Tibial artery (tissue), 4 donors: ENCODE measurements at regions of chr6 and their contacts with region 1.

Region 1: DNA sequence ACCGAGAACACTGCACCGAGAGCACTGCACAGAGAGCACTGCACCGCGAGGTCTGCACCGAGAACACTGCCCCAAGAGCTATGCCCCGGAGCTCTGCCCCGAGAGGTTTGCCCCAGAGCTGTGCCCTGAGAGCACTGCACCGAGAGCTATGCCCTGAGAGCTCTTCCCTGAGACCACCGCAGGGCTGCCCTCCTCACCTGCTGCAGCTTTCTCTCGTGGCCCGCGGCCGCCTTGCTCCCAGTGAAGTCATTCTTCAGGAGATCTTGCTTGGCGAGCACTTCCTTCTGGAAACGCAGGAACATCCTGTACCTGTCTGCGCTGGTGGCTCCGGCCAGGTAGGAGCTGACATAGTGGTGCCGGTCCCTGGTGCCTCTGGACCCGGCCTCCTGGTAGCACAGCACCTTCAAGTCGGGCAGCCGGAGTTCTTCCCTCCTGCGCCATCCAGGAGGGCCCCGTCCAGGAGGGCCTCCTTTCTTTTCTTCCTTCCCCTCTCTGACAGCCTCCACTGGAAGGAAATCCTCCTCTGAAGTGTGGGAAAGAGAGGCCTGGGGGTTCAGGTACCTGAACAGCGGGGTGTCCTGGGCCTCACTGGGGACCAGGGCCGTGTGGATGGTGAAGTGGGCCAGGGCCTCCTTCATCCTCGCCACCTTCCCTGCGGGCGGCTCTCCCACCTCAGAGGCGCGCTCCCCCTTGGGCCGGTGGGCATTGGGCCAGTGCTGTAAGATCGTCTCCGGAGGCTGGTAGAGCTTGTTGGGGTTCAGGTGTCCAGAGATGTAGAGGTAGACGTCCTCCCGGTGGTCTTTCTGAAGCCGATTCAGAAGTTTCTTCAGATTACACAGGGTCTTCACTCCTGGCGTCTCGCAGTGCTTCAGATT is 7.8 kb downstream of the C6orf118 start:
- DNase-seq: no peak
- H3K4me3 ChIP-seq: no peak overlapping the region
- H3K27ac ChIP-seq: no peak overlapping the region
- H3K4me1 ChIP-seq: no peaks in the 10 kb centered on the region
- H3K27me3 ChIP-seq: no peaks in the 10 kb centered on the region
- CTCF ChIP-seq: no peak

Region 2: DNA sequence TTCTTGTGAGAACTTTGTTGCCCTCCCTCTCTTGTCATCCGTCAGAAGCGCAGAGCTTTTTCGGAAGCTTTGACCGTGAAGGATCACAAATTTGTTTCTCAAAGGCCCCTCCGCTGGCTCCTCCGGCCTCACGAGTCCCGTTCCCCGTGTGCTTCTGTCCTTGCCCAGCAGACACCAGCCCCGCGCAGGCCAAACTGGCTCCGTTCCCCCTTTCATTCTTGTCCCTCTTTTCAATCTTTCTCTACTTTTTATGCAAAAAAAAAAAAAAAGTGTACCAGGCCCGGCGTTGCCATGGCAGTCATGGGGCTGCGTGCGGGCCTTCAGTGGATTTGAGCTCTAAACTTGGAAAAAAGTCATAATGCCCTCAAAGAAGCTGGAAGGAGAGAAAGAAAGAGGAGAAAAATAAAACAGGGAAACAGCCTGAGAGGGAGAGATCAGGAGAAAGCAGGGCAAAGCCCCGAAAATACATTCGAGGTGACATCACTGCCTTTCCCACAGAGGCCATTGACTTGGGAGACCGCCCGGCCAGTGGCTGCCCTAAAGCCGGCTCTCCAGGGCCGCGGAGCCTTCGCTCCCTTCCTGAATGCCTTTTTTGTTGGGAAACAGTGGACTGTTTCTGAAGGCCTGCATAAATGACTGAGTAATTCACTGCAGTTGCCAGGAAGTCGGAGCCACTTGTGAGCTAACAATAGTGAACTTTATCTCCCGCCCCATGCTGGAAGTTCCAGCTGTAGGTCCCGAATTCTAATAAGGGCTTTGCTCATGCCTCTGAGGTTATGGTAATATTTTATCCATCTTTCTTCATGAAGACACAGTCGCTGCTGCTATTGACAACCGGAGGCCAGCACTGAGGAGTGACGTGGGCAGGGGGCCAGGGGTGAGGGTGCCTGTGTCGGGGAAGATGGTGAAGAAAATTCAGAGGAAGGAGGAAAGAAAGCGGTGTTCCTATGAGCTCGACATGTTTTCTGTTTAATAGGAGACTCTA is 1216.2 kb before region 1 on chr6:
- intact Hi-C with region 1: loop called (anchors 5 kb)
- DNase-seq: peak; percentile 86 to 93
- H3K4me3 ChIP-seq: peak overlapping the region; percentile 38 to 47
- H3K27ac ChIP-seq: peak overlapping the region; percentile 90
- H3K4me1 ChIP-seq: peaks cover 0 to 19% (median 9%) of the 10 kb centered on the region in 4 donors
- H3K27me3 ChIP-seq: no peaks in the 10 kb centered on the region
- CTCF ChIP-seq: no peak

Region 3: DNA sequence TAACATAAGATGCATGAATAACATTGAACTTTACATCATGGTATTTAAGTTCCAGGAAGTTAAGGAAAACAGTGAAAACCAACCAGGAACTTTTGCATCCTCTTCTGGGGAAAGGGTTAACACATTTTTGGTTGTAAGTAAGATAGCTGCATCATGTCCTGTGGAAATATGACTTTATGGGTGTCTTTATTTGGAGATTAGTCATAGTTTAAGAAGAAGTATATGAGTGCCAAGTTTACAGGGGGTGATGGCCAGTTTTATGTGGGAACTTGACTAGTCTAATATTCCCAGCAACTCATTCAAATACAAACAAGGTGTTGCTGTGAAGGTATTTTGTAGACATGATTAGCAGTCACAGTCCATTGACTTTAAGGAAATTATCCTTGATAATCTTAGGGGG is 283.5 kb after region 1 on chr6:
- intact Hi-C with region 1: no loop called
- DNase-seq: no peak
- H3K4me3 ChIP-seq: no peak overlapping the region
- H3K27ac ChIP-seq: no peak overlapping the region
- H3K4me1 ChIP-seq: no peaks in the 10 kb centered on the region
- H3K27me3 ChIP-seq: no peaks in the 10 kb centered on the region
- CTCF ChIP-seq: no peak

Region 4: GRCh38 chr6:165649166-165650137 is 347.8 kb after region 1 on chr6:
- intact Hi-C with region 1: no loop called
- DNase-seq: no peak
- H3K4me3 ChIP-seq: no peak overlapping the region
- H3K27ac ChIP-seq: no peak overlapping the region
- H3K4me1 ChIP-seq: no peaks in the 10 kb centered on the region
- H3K27me3 ChIP-seq: no peaks in the 10 kb centered on the region
- CTCF ChIP-seq: no peak